ENCODE measurements at regions of chr16 and their contacts with region 1.

Region 1: GRCh38 chr16:85491058-85491771 is 121.9 kb upstream of the GSE1 start:
- DNase-seq: peak in 1 of 2 experiments; percentile 89
- H3K4me3 ChIP-seq: no peak overlapping the region
- H3K27ac ChIP-seq: no peak overlapping the region
- H3K4me1 ChIP-seq: peaks cover 3 to 19% (median 14%) of the 10 kb centered on the region in 4 experiments; a peak in 6 of 7 replicates
- H3K27me3 ChIP-seq: no peaks in the 10 kb centered on the region
- CTCF ChIP-seq: peak; percentile 89 to 96 (median 95)
- EP300 ChIP-seq: no peak
- POLR2A ChIP-seq: no peak
- RAD21 ChIP-seq: peak; percentile 66 to 76

Region 2: GRCh38 chr16:85275533-85276249 is 215.5 kb before region 1 on chr16:
- CTCF ChIA-PET with region 1: interaction called, 10 read pairs
- POLR2A ChIA-PET with region 1: no interaction called
- DNase-seq: peak in 1 of 2 experiments; percentile 96
- H3K4me3 ChIP-seq: no peak overlapping the region
- H3K27ac ChIP-seq: no peak overlapping the region
- H3K4me1 ChIP-seq: peaks cover 0 to 15% (median 4%) of the 10 kb centered on the region in 4 experiments; a peak in 4 of 7 replicates
- H3K27me3 ChIP-seq: peaks cover 0 to under 1% (median 0%) of the 10 kb centered on the region in 4 experiments; a peak in 1 of 7 replicates
- CTCF ChIP-seq: peak; percentile 96 to 99 (median 97)
- EP300 ChIP-seq: no peak
- POLR2A ChIP-seq: no peak
- RAD21 ChIP-seq: peak; percentile 91 to 93

Region 3: DNA sequence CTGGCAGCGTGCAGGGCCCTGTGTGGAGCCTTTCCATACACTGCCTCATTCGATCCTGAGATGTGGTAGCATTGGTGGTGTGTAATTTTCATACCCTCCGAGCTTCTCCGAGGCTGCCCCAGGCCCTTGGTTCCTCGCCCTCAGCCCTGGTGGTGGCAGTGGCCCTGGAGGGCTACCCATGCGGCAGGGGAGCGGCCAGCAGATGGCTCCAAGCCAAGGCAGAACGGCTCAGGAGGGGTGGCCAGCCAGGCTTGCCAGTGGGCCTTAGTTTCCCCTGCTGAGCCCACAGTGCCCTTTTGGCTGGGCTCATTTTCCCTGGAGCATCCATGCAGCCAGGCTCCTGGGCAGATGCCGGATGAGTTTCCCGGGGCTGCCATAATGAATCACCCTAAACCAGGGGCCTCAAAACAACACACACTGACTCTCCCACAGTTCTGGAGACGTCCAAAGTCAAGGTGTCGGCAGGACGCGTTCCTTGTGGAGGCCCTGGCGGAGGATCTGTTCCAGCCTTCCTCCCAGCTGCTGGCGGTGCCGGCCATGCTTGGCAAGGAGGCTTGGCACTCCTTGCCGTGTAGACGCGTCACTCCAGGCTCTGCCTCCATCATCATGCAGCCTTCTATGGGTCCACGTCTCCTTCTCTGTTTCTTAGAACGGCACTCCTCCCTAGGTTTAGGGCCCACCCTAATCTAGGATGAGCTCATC is 36.9 kb before region 1 on chr16:
- CTCF ChIA-PET with region 1: interaction called, 44 read pairs
- POLR2A ChIA-PET with region 1: no interaction called
- DNase-seq: no peak
- H3K4me3 ChIP-seq: no peak overlapping the region
- H3K27ac ChIP-seq: no peak overlapping the region
- H3K4me1 ChIP-seq: peaks cover 0 to 13% (median 7%) of the 10 kb centered on the region in 4 experiments; a peak in 5 of 7 replicates
- H3K27me3 ChIP-seq: peaks cover 0 to 4% (median 3%) of the 10 kb centered on the region in 4 experiments; a peak in 5 of 7 replicates
- CTCF ChIP-seq: peak; percentile 26 to 44 (median 33)
- EP300 ChIP-seq: no peak
- POLR2A ChIP-seq: no peak
- RAD21 ChIP-seq: peak; percentile 27 to 45; a peak in 3 of 4 replicates

Region 4: GRCh38 chr16:85503679-85504231 is 12.5 kb after region 1 on chr16:
- CTCF ChIA-PET with region 1: interaction called, 77 read pairs
- POLR2A ChIA-PET with region 1: interaction called, 4 read pairs
- DNase-seq: no peak
- H3K4me3 ChIP-seq: no peak overlapping the region
- H3K27ac ChIP-seq: no peak overlapping the region
- H3K4me1 ChIP-seq: peaks cover 2 to 14% (median 11%) of the 10 kb centered on the region in 4 experiments; a peak in 6 of 7 replicates
- H3K27me3 ChIP-seq: no peaks in the 10 kb centered on the region; a peak in 1 of 7 replicates
- CTCF ChIP-seq: no peak
- EP300 ChIP-seq: no peak
- POLR2A ChIP-seq: no peak
- RAD21 ChIP-seq: no peak

Region 5: GRCh38 chr16:85536411-85537330 is 45.5 kb after region 1 on chr16:
- CTCF ChIA-PET with region 1: interaction called, 99 read pairs
- POLR2A ChIA-PET with region 1: interaction called, 3 read pairs
- DNase-seq: no peak
- H3K4me3 ChIP-seq: no peak overlapping the region
- H3K27ac ChIP-seq: no peak overlapping the region
- H3K4me1 ChIP-seq: peaks cover 0 to 5% (median 3%) of the 10 kb centered on the region in 4 experiments; a peak in 5 of 7 replicates
- H3K27me3 ChIP-seq: no peaks in the 10 kb centered on the region
- CTCF ChIP-seq: no peak
- EP300 ChIP-seq: no peak
- POLR2A ChIP-seq: no peak
- RAD21 ChIP-seq: no peak

Region 6: GRCh38 chr16:85564277-85565051 is 73.2 kb after region 1 on chr16:
- CTCF ChIA-PET with region 1: interaction called, 19 read pairs
- POLR2A ChIA-PET with region 1: no interaction called
- DNase-seq: no peak
- H3K4me3 ChIP-seq: no peak overlapping the region
- H3K27ac ChIP-seq: no peak overlapping the region
- H3K4me1 ChIP-seq: peaks cover 14 to 52% (median 27%) of the 10 kb centered on the region in 4 experiments
- H3K27me3 ChIP-seq: no peaks in the 10 kb centered on the region
- CTCF ChIP-seq: peak; percentile 53 to 70 (median 68)
- EP300 ChIP-seq: no peak
- POLR2A ChIP-seq: no peak
- RAD21 ChIP-seq: peak in 1 of 2 experiments; percentile 18; a peak in 1 of 4 replicates

Region 7: GRCh38 chr16:85626191-85626981 is 135.2 kb after region 1 on chr16:
- CTCF ChIA-PET with region 1: interaction called, 14 read pairs
- POLR2A ChIA-PET with region 1: no interaction called
- DNase-seq: peak in 1 of 2 experiments; percentile 71
- H3K4me3 ChIP-seq: peak overlapping the region in 3 of 4 experiments; percentile 20 to 50 (median 21); a peak in 5 of 8 replicates
- H3K27ac ChIP-seq: no peak overlapping the region; the same call in 1 of the 2 replicates
- H3K4me1 ChIP-seq: peaks cover 0 to 21% (median 12%) of the 10 kb centered on the region in 4 experiments; a peak in 6 of 7 replicates
- H3K27me3 ChIP-seq: no peaks in the 10 kb centered on the region; a peak in 1 of 7 replicates
- CTCF ChIP-seq: no peak
- EP300 ChIP-seq: no peak
- POLR2A ChIP-seq: no peak
- RAD21 ChIP-seq: no peak